Aorta (tissue), 5 donors: ENCODE measurements at regions of chr6 and their contacts with region 1.

Region 1: DNA sequence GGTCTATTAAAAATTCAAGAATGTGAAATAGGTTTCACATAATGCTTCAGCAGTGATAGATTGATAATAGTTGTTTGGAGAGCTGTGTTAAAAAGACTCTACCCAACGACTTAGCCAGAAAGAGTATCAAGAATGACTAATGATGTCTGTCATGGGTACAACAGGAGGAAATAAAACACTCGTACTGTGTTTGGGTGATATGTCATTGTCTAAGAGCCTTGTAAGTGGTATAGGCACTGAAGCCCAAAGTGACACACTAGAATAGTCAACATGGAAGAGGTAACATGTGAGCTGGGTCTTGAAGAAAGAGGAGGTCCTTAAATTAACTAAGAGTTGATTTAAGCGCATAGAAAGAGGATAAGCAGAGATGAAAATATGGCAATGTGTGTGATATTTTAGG is 471.8 kb upstream of the MAN1A1 start:
- DNase-seq: no peak
- ATAC-seq: no peak
- H3K4me3 ChIP-seq: no peak overlapping the region
- H3K27ac ChIP-seq: no peak overlapping the region
- H3K4me1 ChIP-seq: no peaks in the 10 kb centered on the region
- H3K27me3 ChIP-seq: no peaks in the 10 kb centered on the region

Region 2: GRCh38 chr6:119768201-119768600 is 53.2 kb before region 1 on chr6:
- intact Hi-C with region 1: loop called in 1 of 2 experiments (anchors 1 kb)
- DNase-seq: no peak
- ATAC-seq: no peak
- H3K4me3 ChIP-seq: no peak overlapping the region
- H3K27ac ChIP-seq: no peak overlapping the region
- H3K4me1 ChIP-seq: no peaks in the 10 kb centered on the region
- H3K27me3 ChIP-seq: no peaks in the 10 kb centered on the region

Region 3: DNA sequence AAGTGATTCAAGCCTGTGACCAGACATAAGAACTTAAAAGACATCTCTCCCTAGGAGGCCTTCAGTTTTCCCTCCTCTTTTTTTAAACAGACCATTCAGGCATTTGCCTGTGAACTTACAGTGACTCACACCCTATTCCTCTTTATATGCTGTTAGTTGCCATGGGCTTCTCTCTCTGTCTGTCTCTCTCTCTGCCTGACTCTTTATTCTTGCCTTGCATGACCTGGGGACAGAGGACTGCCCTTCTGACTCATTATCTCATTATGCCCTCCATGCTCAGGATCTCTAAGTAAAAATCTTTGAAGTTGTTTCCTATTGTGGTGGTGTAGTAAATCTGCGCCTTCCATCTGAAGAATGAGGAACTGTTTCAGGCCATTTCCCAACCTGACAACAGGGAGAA is 29.6 kb before region 1 on chr6:
- intact Hi-C with region 1: no loop called
- DNase-seq: no peak
- ATAC-seq: no peak
- H3K4me3 ChIP-seq: no peak overlapping the region
- H3K27ac ChIP-seq: no peak overlapping the region
- H3K4me1 ChIP-seq: no peaks in the 10 kb centered on the region
- H3K27me3 ChIP-seq: no peaks in the 10 kb centered on the region

Region 4: DNA sequence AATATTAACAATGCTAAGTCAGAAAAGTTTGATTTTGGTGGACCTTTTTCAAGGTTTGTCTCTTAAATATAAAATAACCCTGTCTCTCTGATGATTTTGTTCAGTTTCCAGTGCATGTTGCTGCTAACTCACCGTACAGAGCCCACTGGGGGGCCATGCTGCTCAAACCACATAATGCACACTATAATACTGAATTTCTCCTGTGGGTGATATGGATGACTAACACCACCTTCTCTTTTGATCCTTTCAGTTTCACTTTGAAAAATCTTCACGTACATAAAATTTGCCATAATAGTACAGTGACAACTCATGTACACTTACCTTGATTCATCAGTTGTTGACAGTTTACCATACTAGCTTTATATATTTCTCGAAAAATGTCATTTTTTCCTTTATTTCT is 34.8 kb after region 1 on chr6:
- intact Hi-C with region 1: no loop called
- DNase-seq: no peak
- ATAC-seq: no peak
- H3K4me3 ChIP-seq: no peak overlapping the region
- H3K27ac ChIP-seq: no peak overlapping the region
- H3K4me1 ChIP-seq: no peaks in the 10 kb centered on the region
- H3K27me3 ChIP-seq: no peaks in the 10 kb centered on the region

Region 5: GRCh38 chr6:120116343-120116742 is 295.0 kb after region 1 on chr6:
- intact Hi-C with region 1: no loop called
- DNase-seq: no peak
- ATAC-seq: no peak
- H3K4me3 ChIP-seq: no peak overlapping the region
- H3K27ac ChIP-seq: no peak overlapping the region
- H3K4me1 ChIP-seq: no peaks in the 10 kb centered on the region
- H3K27me3 ChIP-seq: no peaks in the 10 kb centered on the region